HAP-1 (cell line): ENCODE measurements at regions of chr2 and their contacts with region 1.

Region 1: GRCh38 chr2:227132986-227133385 is 31.0 kb downstream of the COL4A4 start:
- DNase-seq: no peak
- H3K4me3 ChIP-seq: no peak overlapping the region
- H3K4me1 ChIP-seq: no peaks in the 10 kb centered on the region
- H3K27me3 ChIP-seq: no peaks in the 10 kb centered on the region

Region 2: GRCh38 chr2:227228061-227228667 is 95.2 kb after region 1 on chr2:
- in situ Hi-C with region 1: loop called (anchors 10 kb)
- DNase-seq: no peak
- H3K4me3 ChIP-seq: no peak overlapping the region
- H3K4me1 ChIP-seq: no peaks in the 10 kb centered on the region
- H3K27me3 ChIP-seq: no peaks in the 10 kb centered on the region